ENCODE measurements at regions of chr6 and their contacts with region 1.

Region 1: DNA sequence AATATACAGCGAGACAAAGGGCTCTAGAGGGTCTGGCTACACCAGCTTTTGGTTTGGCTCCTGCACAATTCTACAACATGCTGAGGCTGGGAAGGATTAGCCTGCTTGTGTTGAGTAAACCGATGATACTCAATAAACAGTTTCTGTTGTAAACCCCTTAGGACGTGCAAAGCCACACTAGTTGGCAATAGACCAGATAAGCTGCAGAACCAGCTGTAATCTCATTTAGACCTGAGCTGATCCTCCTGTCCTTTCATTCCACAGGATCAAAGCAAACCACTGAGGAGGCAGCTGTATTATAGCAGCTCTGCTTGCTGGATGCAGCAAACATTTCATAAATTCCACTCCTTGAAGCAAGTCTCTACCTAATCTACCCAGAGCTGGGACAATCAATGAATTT is 79.7 kb downstream of the MMS22L start:
- DNase-seq: no peak
- H3K4me3 ChIP-seq: no peak overlapping the region
- H3K27ac ChIP-seq: no peak overlapping the region
- H3K4me1 ChIP-seq: no peaks in the 10 kb centered on the region
- H3K27me3 ChIP-seq: no peaks in the 10 kb centered on the region
- CTCF ChIP-seq: no peak
- POLR2A ChIP-seq: no peak

Region 2: GRCh38 chr6:97240222-97240621 is 36.9 kb after region 1 on chr6:
- intact Hi-C with region 1: loop called (anchors 2 kb)
- DNase-seq: no peak
- H3K4me3 ChIP-seq: no peak overlapping the region
- H3K27ac ChIP-seq: no peak overlapping the region
- H3K4me1 ChIP-seq: no peaks in the 10 kb centered on the region
- H3K27me3 ChIP-seq: no peaks in the 10 kb centered on the region
- CTCF ChIP-seq: no peak
- POLR2A ChIP-seq: no peak

Region 3: GRCh38 chr6:98498866-98499265 is 1295.5 kb after region 1 on chr6:
- intact Hi-C with region 1: no loop called
- DNase-seq: no peak
- H3K4me3 ChIP-seq: no peak overlapping the region
- H3K27ac ChIP-seq: no peak overlapping the region
- H3K4me1 ChIP-seq: no peaks in the 10 kb centered on the region
- H3K27me3 ChIP-seq: no peaks in the 10 kb centered on the region
- CTCF ChIP-seq: no peak
- POLR2A ChIP-seq: no peak

Measured in breast epithelium (tissue), 4 donors.